PC-9 (cell line): ENCODE measurements at regions of chr16 and their contacts with region 1.

Region 1: GRCh38 chr16:56317998-56318826 is 107.1 kb downstream of the AMFR start:
- DNase-seq: peak; percentile 42 to 72
- H3K4me3 ChIP-seq: no peak overlapping the region
- H3K27ac ChIP-seq: no peak overlapping the region
- H3K4me1 ChIP-seq: peaks cover 11% of the 10 kb centered on the region
- H3K27me3 ChIP-seq: no peaks in the 10 kb centered on the region
- CTCF ChIP-seq: peak; percentile 94

Region 2: DNA sequence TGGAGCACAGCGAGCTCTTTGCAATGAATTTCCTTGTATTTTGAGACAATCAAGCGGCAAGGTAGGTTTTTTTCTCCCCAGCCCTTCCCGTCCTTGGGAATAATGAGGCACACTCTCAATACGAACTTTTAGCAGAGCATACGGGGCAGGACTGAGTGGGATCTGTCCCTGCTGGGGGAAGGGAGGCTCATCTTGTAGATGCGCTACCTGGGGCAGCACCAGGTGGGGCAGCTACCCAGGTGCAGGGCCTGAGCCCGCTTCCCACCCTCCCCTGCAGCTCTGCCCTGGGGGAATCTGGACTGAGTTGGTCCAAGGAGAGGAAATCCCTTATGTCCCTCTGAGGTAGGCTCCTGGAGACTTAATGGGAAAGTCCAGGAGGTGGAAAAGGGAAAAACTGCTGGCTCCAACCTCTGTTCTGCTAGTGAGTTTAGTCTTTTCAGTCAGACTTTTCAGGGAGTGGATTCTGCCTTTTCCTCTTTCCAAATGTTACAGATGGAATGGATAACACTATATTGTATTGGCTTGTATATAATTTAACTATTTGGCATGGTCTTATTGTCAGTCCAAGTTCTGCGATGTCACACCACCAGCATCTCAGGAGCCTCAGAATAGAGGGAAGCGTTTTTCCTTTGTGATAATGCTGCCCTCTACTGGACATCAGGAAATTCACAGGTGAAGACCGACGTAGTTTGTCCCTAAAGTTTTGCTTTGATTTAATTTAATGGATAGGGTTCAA is 475.7 kb before region 1 on chr16:
- CTCF ChIA-PET with region 1: no interaction called
- POLR2A ChIA-PET with region 1: no interaction called
- intact Hi-C with region 1: loop called (anchors 1 kb)
- DNase-seq: peak in 1 of 2 experiments; percentile 18
- H3K4me3 ChIP-seq: no peak overlapping the region
- H3K27ac ChIP-seq: no peak overlapping the region
- H3K4me1 ChIP-seq: peaks cover 3% of the 10 kb centered on the region; the same call in 1 of the 2 replicates
- H3K27me3 ChIP-seq: no peaks in the 10 kb centered on the region
- CTCF ChIP-seq: peak; percentile 90

Region 3: GRCh38 chr16:55944377-55944802 is 373.8 kb before region 1 on chr16:
- CTCF ChIA-PET with region 1: interaction called, 3 read pairs
- POLR2A ChIA-PET with region 1: no interaction called
- intact Hi-C with region 1: loop called (anchors 1 kb)
- DNase-seq: peak in 1 of 2 experiments; percentile 49
- H3K4me3 ChIP-seq: no peak overlapping the region
- H3K27ac ChIP-seq: no peak overlapping the region
- H3K4me1 ChIP-seq: no peaks in the 10 kb centered on the region
- H3K27me3 ChIP-seq: no peaks in the 10 kb centered on the region; the same call in 1 of the 2 replicates
- CTCF ChIP-seq: peak; percentile 95

Region 4: GRCh38 chr16:56029026-56029425 is 289.2 kb before region 1 on chr16:
- CTCF ChIA-PET with region 1: no interaction called
- POLR2A ChIA-PET with region 1: no interaction called
- intact Hi-C with region 1: loop called (anchors 5 kb)
- DNase-seq: no peak
- H3K4me3 ChIP-seq: no peak overlapping the region
- H3K27ac ChIP-seq: no peak overlapping the region
- H3K4me1 ChIP-seq: no peaks in the 10 kb centered on the region
- H3K27me3 ChIP-seq: peaks cover 11% of the 10 kb centered on the region
- CTCF ChIP-seq: no peak